ENCODE measurements at regions of chr6 and their contacts with region 1.

Region 1: GRCh38 chr6:11711003-11711983 is 67.3 kb downstream of the ADTRP start:
- DNase-seq: peak; percentile 60
- CTCF ChIP-seq: no peak

Region 2: GRCh38 chr6:11700118-11700718 is 11.1 kb before region 1 on chr6:
- CTCF ChIA-PET with region 1: interaction called, 27 read pairs
- POLR2A ChIA-PET with region 1: no interaction called
- DNase-seq: peak; percentile 35
- CTCF ChIP-seq: peak; percentile 41

Region 3: DNA sequence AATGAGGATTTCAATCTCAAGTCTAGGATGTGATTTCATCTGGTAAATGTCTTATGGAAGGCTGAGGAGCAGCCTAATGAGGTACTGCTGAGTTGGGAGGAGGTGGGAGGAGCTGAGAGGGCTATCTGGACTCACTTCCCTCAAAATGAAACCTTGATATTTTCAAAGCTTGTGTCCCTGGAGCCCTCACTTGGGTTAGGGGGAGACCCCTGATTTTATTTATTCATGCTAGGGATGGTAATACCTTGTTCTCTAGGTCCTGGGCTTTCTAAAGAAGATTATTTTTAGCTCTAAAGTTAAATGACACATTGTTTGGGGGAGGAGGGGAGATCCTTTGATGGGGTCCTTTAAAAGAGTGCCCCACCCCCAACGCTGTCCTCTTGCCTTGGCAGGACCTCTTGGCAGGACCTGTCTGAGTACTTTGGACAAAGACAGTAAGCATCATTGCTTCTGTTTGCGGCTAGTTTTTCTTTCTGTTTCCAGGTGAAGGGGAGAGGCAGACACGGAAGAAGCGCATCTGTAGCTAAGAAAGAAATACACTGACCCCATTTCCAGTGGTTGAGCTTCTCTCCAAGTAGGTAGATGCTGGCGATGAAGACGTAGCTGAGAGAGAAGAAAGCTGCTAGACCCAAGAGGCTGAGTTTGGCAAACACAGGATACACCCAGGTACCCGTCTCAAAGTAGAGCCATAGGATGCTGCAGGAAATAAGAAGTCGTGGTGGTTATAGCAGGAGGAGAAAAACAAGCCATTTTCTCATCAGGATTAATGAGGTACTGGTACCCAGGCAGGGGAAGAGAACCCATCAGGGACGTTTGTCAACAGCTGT is 11.7 kb after region 1 on chr6:
- CTCF ChIA-PET with region 1: interaction called, 27 read pairs
- POLR2A ChIA-PET with region 1: interaction called, 9 read pairs
- DNase-seq: peak; percentile 38
- CTCF ChIP-seq: no peak

Measured in GM10248 (cell line).